Lower leg skin (tissue), 4 donors: ENCODE measurements at regions of chr3 and their contacts with region 1.

Region 1: DNA sequence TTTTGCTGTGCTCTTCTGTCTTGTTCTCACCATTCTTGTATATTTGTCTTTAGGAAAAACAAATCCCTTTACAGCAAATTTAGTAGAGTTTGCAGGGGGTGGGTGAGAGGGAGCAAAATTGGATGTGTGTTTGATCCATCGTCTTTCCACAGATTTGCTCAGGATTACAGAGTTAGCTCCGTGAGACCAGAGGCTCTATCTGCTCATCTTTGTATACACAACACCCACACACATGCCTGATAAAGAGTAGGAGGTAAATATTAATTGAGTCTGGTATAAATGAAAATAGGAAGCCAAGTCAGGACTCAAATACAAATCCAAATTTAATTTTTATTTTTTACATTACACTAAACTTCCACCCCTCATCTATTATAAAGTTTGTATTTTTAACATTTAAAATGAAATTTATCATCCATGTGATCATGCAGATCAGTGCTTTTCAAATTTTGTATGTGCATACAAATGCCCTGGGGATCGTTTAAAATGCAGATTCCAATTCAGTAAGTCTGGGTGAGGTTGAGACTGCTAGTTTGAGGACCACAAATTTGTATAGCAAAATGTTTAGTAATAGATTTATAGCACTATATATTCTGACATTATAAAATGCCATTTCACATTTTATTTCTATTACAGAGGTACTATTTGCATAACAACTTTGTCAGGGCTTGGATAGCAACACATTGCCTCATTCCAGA is 326.7 kb downstream of the LSAMP start:
- DNase-seq: no peak
- H3K4me3 ChIP-seq: no peak overlapping the region
- CTCF ChIP-seq: no peak
- POLR2A ChIP-seq: no peak

Region 2: DNA sequence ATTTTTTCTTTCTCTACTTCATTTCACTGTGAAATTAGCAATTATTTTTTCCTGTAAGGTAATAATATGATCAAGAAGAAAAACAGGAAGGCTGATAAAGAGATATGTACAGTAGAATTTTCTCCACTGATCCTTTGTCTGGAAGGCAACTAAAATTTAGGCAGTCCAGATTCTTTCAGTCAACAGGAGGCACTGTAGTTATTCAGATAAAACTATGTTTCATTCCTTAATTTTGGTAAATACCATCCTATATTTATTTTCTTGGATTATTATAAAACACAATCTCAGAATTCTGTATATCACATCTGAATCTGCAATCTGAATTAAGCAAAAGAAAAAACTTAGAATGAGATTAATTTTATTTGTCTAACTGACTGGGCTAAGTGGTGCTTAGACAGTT is 16.6 kb before region 1 on chr3:
- intact Hi-C with region 1: loop called (anchors 2 kb)
- DNase-seq: no peak
- H3K4me3 ChIP-seq: no peak overlapping the region
- CTCF ChIP-seq: no peak
- POLR2A ChIP-seq: no peak

Region 3: DNA sequence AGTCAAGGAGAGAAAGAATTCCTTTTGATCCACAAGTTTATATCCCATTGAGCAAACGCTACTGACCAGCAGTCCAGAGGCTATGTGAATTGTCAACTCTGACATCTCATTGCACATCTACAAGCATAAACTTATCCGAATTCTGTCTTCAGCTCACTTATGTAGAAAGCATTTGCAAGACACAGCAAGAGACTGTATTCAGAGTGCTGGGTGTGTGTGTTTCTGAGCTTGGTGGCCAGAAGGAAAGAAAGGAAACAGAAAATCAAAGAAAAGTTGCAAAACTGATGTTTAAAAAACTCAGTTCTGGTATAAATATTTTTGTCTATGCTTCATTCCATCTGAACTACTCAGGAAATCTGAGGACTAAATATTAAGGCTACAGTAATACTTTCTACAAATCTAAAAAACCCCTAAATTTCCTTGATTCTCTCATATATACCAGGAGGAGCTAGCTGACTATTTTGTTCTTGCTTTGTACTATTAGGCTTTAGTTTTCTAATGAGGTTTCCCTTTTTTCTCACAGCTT is 281.1 kb after region 1 on chr3:
- intact Hi-C with region 1: no loop called
- DNase-seq: no peak
- H3K4me3 ChIP-seq: no peak overlapping the region
- CTCF ChIP-seq: no peak
- POLR2A ChIP-seq: no peak